CD4-positive, alpha-beta T cell (primary cell): ENCODE measurements at regions of chr6 and their contacts with region 1.

Region 1: GRCh38 chr6:156009656-156010055 is 554.0 kb upstream of the NOX3 start:
- DNase-seq: no peak
- ATAC-seq: no peak
- H3K4me3 ChIP-seq: no peak overlapping the region
- H3K4me3 Mint-ChIP-seq: no peak overlapping the region
- H3K27ac ChIP-seq: no peak overlapping the region
- H3K27ac Mint-ChIP-seq: no peak overlapping the region
- H3K4me1 ChIP-seq: no peaks in the 10 kb centered on the region
- H3K4me1 Mint-ChIP-seq: peaks cover 20% of the 10 kb centered on the region
- H3K27me3 ChIP-seq: no peaks in the 10 kb centered on the region
- H3K27me3 Mint-ChIP-seq: no peaks in the 10 kb centered on the region
- CTCF ChIP-seq: no peak

Region 2: DNA sequence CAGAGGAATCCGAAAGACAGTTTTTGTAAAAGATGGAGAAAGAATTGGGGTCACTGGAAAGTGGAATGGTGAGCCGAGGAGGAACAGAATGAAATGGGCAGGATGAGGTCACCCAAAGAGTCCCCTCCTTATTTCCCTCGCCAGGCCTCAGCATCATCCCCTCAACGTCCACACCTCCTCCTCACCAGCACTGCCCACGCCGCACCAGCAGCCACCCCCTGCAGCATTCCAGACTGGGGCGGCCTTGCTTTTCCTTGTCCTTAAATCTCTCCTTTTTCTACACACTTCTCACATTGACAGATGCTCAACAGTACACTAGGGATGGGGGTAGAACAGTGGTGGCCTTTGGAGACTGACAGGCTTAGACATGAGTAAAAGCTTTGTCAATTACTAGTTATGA is 191.0 kb before region 1 on chr6:
- CTCF ChIA-PET with region 1: no interaction called
- POLR2A ChIA-PET with region 1: no interaction called
- intact Hi-C with region 1: loop called in 1 of 2 experiments (anchors 10 kb)
- DNase-seq: no peak
- ATAC-seq: no peak
- H3K4me3 ChIP-seq: no peak overlapping the region
- H3K4me3 Mint-ChIP-seq: no peak overlapping the region
- H3K27ac ChIP-seq: no peak overlapping the region
- H3K27ac Mint-ChIP-seq: no peak overlapping the region
- H3K4me1 ChIP-seq: no peaks in the 10 kb centered on the region
- H3K4me1 Mint-ChIP-seq: no peaks in the 10 kb centered on the region
- H3K27me3 ChIP-seq: no peaks in the 10 kb centered on the region
- H3K27me3 Mint-ChIP-seq: no peaks in the 10 kb centered on the region
- CTCF ChIP-seq: no peak

Region 3: GRCh38 chr6:155970876-155971708 is 38.6 kb before region 1 on chr6:
- CTCF ChIA-PET with region 1: no interaction called
- POLR2A ChIA-PET with region 1: no interaction called
- intact Hi-C with region 1: no loop called
- DNase-seq: peak in 2 of 14 experiments; percentile 14 to 24
- ATAC-seq: peak; percentile 69
- H3K4me3 ChIP-seq: no peak overlapping the region
- H3K4me3 Mint-ChIP-seq: peak overlapping the region; percentile 4
- H3K27ac ChIP-seq: no peak overlapping the region
- H3K27ac Mint-ChIP-seq: peak overlapping the region; percentile 12
- H3K4me1 ChIP-seq: no peaks in the 10 kb centered on the region
- H3K4me1 Mint-ChIP-seq: peaks cover 32% of the 10 kb centered on the region
- H3K27me3 ChIP-seq: no peaks in the 10 kb centered on the region
- H3K27me3 Mint-ChIP-seq: no peaks in the 10 kb centered on the region
- CTCF ChIP-seq: no peak

Region 4: GRCh38 chr6:155993240-155993639 is 16.4 kb before region 1 on chr6:
- CTCF ChIA-PET with region 1: no interaction called
- POLR2A ChIA-PET with region 1: no interaction called
- intact Hi-C with region 1: no loop called
- DNase-seq: no peak
- ATAC-seq: no peak
- H3K4me3 ChIP-seq: no peak overlapping the region
- H3K4me3 Mint-ChIP-seq: no peak overlapping the region
- H3K27ac ChIP-seq: no peak overlapping the region
- H3K27ac Mint-ChIP-seq: no peak overlapping the region
- H3K4me1 ChIP-seq: no peaks in the 10 kb centered on the region
- H3K4me1 Mint-ChIP-seq: no peaks in the 10 kb centered on the region
- H3K27me3 ChIP-seq: no peaks in the 10 kb centered on the region
- H3K27me3 Mint-ChIP-seq: no peaks in the 10 kb centered on the region
- CTCF ChIP-seq: no peak